Activated CD4-positive, alpha-beta memory T cell treated with anti-CD3 and anti-CD28 coated beads for 36 hours (primary cell): ENCODE measurements at regions of chr10 and their contacts with region 1.

Region 1: DNA sequence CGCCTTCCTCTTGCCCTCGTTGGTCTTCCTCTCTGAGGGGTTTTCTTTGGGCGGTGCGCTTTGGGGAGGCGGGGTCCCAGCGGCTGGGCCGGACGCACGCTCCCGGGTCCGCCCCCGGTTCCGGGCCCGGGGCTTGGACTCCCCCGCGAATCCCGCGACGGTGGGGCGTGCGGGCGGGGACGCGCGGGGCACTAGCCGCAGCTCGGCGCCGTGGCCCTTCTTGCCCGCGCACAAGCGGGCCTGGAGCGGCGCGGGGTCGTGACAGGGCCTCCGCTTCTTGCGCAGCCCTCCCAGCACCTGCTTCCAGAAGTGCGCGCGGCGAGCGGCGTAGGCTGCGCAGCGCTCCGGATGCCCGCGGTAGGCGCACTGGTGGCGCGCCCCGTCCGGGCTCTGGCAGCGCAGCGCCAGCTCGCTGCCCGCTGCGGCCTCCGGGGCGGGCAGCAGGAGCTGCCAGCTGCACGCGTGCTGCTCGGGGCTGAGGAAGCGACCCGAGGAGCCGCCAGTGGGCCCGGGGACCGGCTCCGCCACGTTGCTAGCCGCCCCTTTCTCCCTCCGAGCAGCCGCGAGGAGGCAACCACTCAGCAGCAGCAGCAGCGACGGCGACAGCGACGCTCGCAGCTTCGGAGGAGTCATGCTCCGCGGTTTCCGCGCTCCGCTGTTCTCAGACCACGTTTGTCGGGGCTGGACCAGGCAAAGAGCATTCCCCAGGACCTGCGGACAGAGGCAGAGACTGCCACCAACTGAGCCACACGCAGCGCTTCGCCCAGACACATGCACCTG is 759 bp downstream of the FGFBP3 start:
- DNase-seq: peak; percentile 82
- H3K4me3 Mint-ChIP-seq: peak overlapping the region; percentile 91
- H3K27ac Mint-ChIP-seq: peak overlapping the region; percentile 75
- H3K4me1 Mint-ChIP-seq: peaks cover 16% of the 10 kb centered on the region
- H3K27me3 Mint-ChIP-seq: peaks cover 5% of the 10 kb centered on the region

Region 2: GRCh38 chr10:91163269-91163868 is 745.2 kb before region 1 on chr10:
- CTCF ChIA-PET with region 1: no interaction called
- POLR2A ChIA-PET with region 1: no interaction called
- intact Hi-C with region 1: loop called (anchors 10 kb)
- DNase-seq: peak; percentile 79
- H3K4me3 Mint-ChIP-seq: peak overlapping the region; percentile 82
- H3K27ac Mint-ChIP-seq: peak overlapping the region; percentile 87
- H3K4me1 Mint-ChIP-seq: peaks cover 47% of the 10 kb centered on the region
- H3K27me3 Mint-ChIP-seq: no peaks in the 10 kb centered on the region

Region 3: GRCh38 chr10:91389636-91390512 is 518.7 kb before region 1 on chr10:
- CTCF ChIA-PET with region 1: interaction called, 4 read pairs
- POLR2A ChIA-PET with region 1: no interaction called
- intact Hi-C with region 1: loop called (anchors 2 kb)
- DNase-seq: no peak
- H3K4me3 Mint-ChIP-seq: no peak overlapping the region
- H3K27ac Mint-ChIP-seq: no peak overlapping the region
- H3K4me1 Mint-ChIP-seq: peaks cover 4% of the 10 kb centered on the region
- H3K27me3 Mint-ChIP-seq: peaks cover 17% of the 10 kb centered on the region

Region 4: DNA sequence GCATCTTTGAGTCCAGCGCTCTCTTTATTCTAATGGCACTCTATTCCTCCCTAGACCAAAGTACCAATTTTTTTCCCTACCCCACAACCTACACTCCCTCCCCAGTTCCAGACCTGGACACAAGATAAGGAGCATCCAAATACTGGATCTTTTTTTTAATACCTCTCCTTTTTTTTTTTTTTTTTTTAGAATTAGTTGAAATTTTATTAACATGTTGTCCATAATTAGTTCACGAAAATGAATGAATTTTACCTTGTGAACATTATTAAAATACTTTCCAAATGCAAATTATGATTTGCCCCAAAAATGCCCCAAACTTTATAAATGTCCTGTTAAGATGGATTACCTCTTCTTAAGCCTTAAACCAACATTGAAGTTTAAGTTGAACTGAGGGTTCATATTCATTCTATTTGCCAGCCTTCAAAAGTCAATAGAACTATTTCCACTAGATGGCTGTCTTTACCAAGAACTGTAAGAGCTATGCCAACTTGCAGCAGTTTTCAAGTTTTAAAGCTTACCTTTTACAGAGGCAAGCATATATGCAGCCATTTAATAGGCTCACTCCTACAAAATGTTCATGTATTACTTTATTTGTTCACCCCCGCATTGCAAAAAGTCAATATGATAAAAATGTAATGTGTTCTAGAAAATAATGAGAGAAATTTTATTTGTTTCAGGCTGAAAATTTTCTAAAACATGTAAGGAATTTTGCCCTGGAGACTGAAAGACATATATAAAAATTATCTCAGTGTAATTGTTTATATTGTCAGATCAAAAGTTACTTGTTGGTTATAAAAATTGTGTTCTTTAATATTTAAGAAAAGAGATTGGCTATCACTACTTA is 150.0 kb before region 1 on chr10:
- CTCF ChIA-PET with region 1: interaction called, 64 read pairs
- POLR2A ChIA-PET with region 1: interaction called, 5 read pairs
- intact Hi-C with region 1: loop called (anchors 1 kb)
- DNase-seq: no peak
- H3K4me3 Mint-ChIP-seq: no peak overlapping the region
- H3K27ac Mint-ChIP-seq: no peak overlapping the region
- H3K4me1 Mint-ChIP-seq: no peaks in the 10 kb centered on the region
- H3K27me3 Mint-ChIP-seq: peaks cover 14% of the 10 kb centered on the region

Region 5: GRCh38 chr10:91788220-91788924 is 120.2 kb before region 1 on chr10:
- CTCF ChIA-PET with region 1: no interaction called
- POLR2A ChIA-PET with region 1: no interaction called
- intact Hi-C with region 1: no loop called
- DNase-seq: no peak
- H3K4me3 Mint-ChIP-seq: no peak overlapping the region
- H3K27ac Mint-ChIP-seq: no peak overlapping the region
- H3K4me1 Mint-ChIP-seq: no peaks in the 10 kb centered on the region
- H3K27me3 Mint-ChIP-seq: peaks cover under 1% of the 10 kb centered on the region

Region 6: DNA sequence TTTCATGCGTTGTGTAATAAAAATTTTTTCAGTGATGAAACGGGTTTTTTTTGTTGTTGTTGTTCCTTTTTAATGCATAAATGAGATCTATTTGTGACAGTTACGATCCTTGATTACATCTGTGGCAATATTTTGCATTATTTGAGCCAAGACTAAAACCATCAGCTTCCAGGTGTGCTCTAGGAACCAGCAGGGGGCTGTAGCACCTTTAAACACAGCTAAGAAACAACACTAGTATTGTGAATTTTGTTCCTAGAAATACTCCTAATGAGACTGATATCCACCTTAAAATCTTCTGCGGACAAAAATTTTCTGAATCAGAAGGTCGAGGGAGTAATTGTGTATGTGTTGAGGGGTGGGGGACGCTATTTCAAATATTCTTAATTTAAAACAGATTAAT is 51.9 kb before region 1 on chr10:
- CTCF ChIA-PET with region 1: interaction called, 6 read pairs
- POLR2A ChIA-PET with region 1: no interaction called
- intact Hi-C with region 1: loop called (anchors 2 kb)
- DNase-seq: no peak
- H3K4me3 Mint-ChIP-seq: no peak overlapping the region
- H3K27ac Mint-ChIP-seq: no peak overlapping the region
- H3K4me1 Mint-ChIP-seq: no peaks in the 10 kb centered on the region
- H3K27me3 Mint-ChIP-seq: no peaks in the 10 kb centered on the region

Region 7: GRCh38 chr10:91923371-91924211 is 15.1 kb after region 1 on chr10 and contains the start of gene BTAF1:
- CTCF ChIA-PET with region 1: interaction called, 33 read pairs
- POLR2A ChIA-PET with region 1: interaction called, 24 read pairs
- intact Hi-C with region 1: loop called (anchors 1 kb)
- DNase-seq: peak; percentile 94
- H3K4me3 Mint-ChIP-seq: peak within 1 kb of the TSS; percentile 88
- H3K27ac Mint-ChIP-seq: peak within 1 kb of the TSS; percentile 97
- H3K4me1 Mint-ChIP-seq: peaks cover 37% of the 10 kb centered on the region
- H3K27me3 Mint-ChIP-seq: peaks cover 1% of the 10 kb centered on the region
- total RNA-seq, gene BTAF1: 49.9 to 50.7 TPM

Region 8: GRCh38 chr10:91944880-91945630 is 36.5 kb after region 1 on chr10:
- CTCF ChIA-PET with region 1: interaction called, 4 read pairs
- POLR2A ChIA-PET with region 1: no interaction called
- intact Hi-C with region 1: loop called (anchors 2 kb)
- DNase-seq: peak; percentile 48
- H3K4me3 Mint-ChIP-seq: no peak overlapping the region
- H3K27ac Mint-ChIP-seq: peak overlapping the region; percentile 61
- H3K4me1 Mint-ChIP-seq: peaks cover 21% of the 10 kb centered on the region
- H3K27me3 Mint-ChIP-seq: no peaks in the 10 kb centered on the region

Region 9: DNA sequence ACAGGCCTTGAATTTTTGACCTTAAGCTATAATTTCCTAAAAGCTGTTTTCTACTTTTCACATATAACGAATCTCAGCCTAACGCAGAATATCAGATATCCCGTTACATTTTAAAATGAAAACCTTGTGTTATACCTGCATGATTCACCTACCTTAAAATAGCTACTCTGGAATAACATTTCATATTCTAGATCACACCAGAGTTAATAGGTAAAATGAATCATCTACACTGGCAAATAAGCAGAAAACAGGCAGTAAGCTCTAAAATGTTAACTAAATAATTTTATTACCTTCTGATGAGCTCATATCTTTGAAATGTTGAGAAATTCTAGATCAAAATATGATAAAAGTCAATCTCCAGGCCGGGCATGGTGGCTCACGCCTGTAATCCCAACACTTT is 311.0 kb after region 1 on chr10:
- CTCF ChIA-PET with region 1: no interaction called
- POLR2A ChIA-PET with region 1: no interaction called
- intact Hi-C with region 1: no loop called
- DNase-seq: no peak
- H3K4me3 Mint-ChIP-seq: no peak overlapping the region
- H3K27ac Mint-ChIP-seq: no peak overlapping the region
- H3K4me1 Mint-ChIP-seq: no peaks in the 10 kb centered on the region
- H3K27me3 Mint-ChIP-seq: no peaks in the 10 kb centered on the region

Region 10: GRCh38 chr10:92432596-92432995 is 524.1 kb after region 1 on chr10:
- CTCF ChIA-PET with region 1: no interaction called
- POLR2A ChIA-PET with region 1: no interaction called
- intact Hi-C with region 1: no loop called
- DNase-seq: no peak
- H3K4me3 Mint-ChIP-seq: no peak overlapping the region
- H3K27ac Mint-ChIP-seq: no peak overlapping the region
- H3K4me1 Mint-ChIP-seq: no peaks in the 10 kb centered on the region
- H3K27me3 Mint-ChIP-seq: no peaks in the 10 kb centered on the region